Esophagus squamous epithelium (tissue), 5 donors: ENCODE measurements at regions of chr10 and their contacts with region 1.

Region 1: DNA sequence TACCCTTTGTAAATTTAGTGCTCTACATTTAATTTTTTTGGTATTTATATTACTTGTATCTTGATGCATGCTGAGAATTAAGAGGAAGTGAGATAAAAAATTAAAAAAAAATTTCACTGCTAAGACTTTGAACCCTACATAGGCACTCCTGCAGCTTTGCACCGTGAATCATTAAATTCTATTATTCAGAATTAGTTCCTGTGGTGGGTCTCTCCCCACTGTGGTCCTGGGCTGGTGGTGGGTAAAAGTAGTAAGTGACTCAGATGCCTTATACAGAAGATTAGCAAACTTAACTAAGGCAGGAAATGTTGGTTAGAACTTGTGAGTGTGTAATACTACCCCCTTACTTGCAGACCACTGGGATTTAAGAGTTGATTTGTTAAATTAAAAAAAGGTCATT is 72.6 kb downstream of the AP3M1 start:
- DNase-seq: no peak
- H3K4me3 ChIP-seq: no peak overlapping the region
- H3K27ac ChIP-seq: no peak overlapping the region
- H3K4me1 ChIP-seq: peaks cover 0 to 23% (median 0%) of the 10 kb centered on the region in 3 donors
- H3K27me3 ChIP-seq: no peaks in the 10 kb centered on the region
- CTCF ChIP-seq: no peak
- POLR2A ChIP-seq: no peak

Region 2: DNA sequence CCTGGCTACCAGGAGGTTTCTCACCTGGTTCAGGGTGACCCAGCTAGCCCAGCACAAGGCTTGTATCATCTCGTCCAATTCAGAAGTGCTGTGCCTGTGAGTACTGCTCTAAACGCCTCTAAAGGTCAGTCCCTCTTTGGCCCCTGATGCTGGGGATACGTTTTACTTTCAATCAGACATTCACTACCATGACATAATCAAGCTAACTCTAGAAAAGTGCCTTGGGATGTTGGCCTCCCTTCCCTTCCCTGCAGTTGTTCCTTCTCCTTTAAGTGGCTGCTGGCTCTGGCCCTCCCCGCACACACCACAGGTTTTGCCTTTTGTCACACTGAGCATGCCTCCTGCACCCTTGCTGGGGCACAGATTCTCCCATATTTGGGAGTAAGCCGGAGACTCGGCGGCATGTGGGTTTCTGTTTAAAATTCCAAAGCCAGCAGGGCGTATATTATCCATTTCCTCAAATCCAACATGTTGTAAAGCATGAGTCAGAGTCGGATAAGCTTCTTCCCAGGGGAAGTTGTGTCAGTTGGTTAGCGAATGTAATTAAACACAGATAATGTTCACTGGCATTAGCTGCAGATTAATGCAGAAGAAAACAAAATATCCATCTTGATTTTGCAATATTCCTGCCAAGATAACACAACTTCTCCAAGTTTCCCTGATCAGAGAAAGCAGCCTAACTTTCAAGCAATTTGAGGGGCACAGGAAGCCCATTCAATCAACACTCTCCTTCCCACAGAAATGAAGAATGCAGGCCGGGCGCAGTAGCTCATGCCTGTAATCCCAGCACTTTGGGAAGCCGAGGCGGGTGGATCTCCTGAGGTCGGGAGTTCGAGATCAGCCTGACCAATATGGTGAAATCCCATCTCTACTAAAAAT is 111.9 kb before region 1 on chr10:
- intact Hi-C with region 1: loop called (anchors 10 kb)
- DNase-seq: no peak
- H3K4me3 ChIP-seq: peak overlapping the region in 3 of 4 donors; percentile 8 to 44 (median 11)
- H3K27ac ChIP-seq: peak overlapping the region; percentile 75 to 94 (median 85)
- H3K4me1 ChIP-seq: peaks cover 17 to 40% (median 18%) of the 10 kb centered on the region in 3 donors
- H3K27me3 ChIP-seq: no peaks in the 10 kb centered on the region
- CTCF ChIP-seq: no peak
- POLR2A ChIP-seq: peak in 3 of 4 donors; percentile 15 to 59 (median 31)